Activated CD4-positive, alpha-beta memory T cell treated with anti-CD3 and anti-CD28 coated beads, Interleukin-2, amount 10 ng/mL, durations not matched to agents 7 days and 5 days (primary cell): ENCODE measurements at regions of chr10 and their contacts with region 1.

Region 1: DNA sequence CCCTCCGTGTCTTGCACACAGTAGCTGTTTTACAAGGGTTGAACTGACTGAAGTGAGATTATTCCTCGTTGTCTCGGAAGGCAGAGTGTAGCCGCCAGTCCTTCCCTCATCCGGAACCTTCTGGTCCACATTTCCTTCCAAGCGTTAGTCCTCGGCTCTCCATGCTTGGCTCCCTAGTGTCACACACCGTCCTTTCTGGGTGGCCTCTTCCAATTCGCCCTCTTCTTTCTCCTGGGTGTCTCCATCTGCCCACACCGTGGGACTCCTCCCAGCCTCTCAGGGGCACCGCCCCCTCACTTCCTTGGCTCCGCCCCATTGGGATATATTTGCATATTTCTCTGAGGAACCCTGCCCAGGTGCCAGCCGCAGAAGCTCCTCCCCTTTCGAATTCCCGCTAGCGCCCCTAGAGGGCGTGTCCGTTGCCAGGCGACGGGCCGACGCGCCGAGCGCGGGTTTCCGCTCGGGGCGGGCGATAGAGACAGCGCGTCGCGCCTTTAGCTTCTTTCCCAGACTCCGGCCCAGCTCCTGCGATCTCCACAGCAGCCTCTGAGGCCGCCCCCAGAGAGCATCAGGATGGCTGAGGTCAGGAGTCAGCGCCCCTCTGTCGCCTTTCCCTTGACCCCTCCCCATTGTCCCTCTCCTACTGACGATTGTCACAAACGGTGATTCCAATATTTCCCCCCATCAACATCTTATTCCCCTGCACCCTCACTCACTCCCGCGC is at the start of gene CFAP58:
- DNase-seq: peak; percentile 96
- H3K4me3 Mint-ChIP-seq: no peak within 1 kb of the TSS
- H3K27ac Mint-ChIP-seq: peak within 1 kb of the TSS; percentile 64
- H3K4me1 Mint-ChIP-seq: no peaks in the 10 kb centered on the region
- H3K27me3 Mint-ChIP-seq: no peaks in the 10 kb centered on the region
- total RNA-seq, gene CFAP58: 0.45 to 0.58 TPM

Region 2: DNA sequence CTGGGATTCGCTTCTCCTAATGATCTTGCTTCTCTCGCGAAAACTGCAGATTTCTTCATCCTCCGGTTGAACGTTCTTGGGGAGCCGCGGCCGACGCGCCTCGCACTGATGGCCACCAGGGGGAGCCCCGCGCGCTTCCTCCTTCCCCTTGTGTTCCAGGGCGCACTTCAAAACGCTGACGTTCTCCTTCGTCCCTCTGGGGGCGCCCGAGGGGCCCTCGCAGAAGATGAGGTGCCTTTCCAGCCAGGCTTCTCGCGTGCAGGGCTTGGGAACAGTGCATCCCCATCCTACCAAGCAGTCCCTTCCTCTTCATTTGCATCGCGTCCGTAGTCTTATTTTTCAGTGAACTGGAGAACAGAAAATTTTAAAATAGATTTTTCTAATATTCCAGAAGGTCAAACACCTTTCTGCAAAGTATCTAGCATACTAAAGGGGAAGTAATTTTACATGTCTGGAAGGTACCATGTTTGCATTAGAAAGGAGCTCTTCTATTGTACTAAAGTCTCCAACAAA is 62.0 kb before region 1 on chr10:
- CTCF ChIA-PET with region 1: interaction called, 175 read pairs
- POLR2A ChIA-PET with region 1: interaction called, 8 read pairs
- DNase-seq: peak; percentile 90
- H3K4me3 Mint-ChIP-seq: no peak overlapping the region
- H3K27ac Mint-ChIP-seq: no peak overlapping the region
- H3K4me1 Mint-ChIP-seq: peaks cover 12% of the 10 kb centered on the region
- H3K27me3 Mint-ChIP-seq: peaks cover 33% of the 10 kb centered on the region

Region 3: GRCh38 chr10:104300736-104301292 is 52.7 kb before region 1 on chr10:
- CTCF ChIA-PET with region 1: interaction called, 237 read pairs
- POLR2A ChIA-PET with region 1: interaction called, 29 read pairs
- DNase-seq: peak; percentile 41
- H3K4me3 Mint-ChIP-seq: no peak overlapping the region
- H3K27ac Mint-ChIP-seq: peak overlapping the region; percentile 42
- H3K4me1 Mint-ChIP-seq: peaks cover 42% of the 10 kb centered on the region
- H3K27me3 Mint-ChIP-seq: peaks cover 8% of the 10 kb centered on the region

Region 4: GRCh38 chr10:104308439-104308903 is 45.0 kb before region 1 on chr10:
- CTCF ChIA-PET with region 1: interaction called, 237 read pairs
- POLR2A ChIA-PET with region 1: interaction called, 29 read pairs
- DNase-seq: no peak
- H3K4me3 Mint-ChIP-seq: no peak overlapping the region
- H3K27ac Mint-ChIP-seq: peak overlapping the region; percentile 71
- H3K4me1 Mint-ChIP-seq: peaks cover 47% of the 10 kb centered on the region
- H3K27me3 Mint-ChIP-seq: no peaks in the 10 kb centered on the region

Region 5: DNA sequence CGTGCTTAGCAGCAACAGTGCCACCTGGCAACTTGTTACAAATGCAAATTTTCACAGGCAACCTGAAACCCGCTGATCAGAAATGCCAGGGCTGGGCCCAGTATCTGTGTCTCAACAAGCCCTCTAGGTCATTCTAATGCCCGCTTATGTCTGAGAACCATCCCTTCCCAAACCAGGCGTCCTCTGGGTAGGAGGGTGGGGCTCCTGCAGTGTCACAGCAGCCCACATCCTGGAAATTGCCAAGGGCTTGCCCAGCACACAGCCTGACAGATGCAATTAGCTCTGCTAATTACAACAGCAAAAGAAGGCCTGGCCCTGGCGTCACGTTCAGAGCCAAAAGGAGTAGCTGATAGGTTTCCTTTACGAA is 31.1 kb before region 1 on chr10:
- CTCF ChIA-PET with region 1: interaction called, 13 read pairs
- POLR2A ChIA-PET with region 1: interaction called, 6 read pairs
- DNase-seq: peak; percentile 76
- H3K4me3 Mint-ChIP-seq: peak overlapping the region; percentile 67
- H3K27ac Mint-ChIP-seq: peak overlapping the region; percentile 89
- H3K4me1 Mint-ChIP-seq: peaks cover 87% of the 10 kb centered on the region
- H3K27me3 Mint-ChIP-seq: no peaks in the 10 kb centered on the region

Region 6: GRCh38 chr10:104337974-104338735 is 15.3 kb before region 1 on chr10 and contains the start of gene ITPRIP:
- CTCF ChIA-PET with region 1: interaction called, 39 read pairs
- POLR2A ChIA-PET with region 1: interaction called, 37 read pairs
- DNase-seq: peak; percentile 78
- H3K4me3 Mint-ChIP-seq: peak within 1 kb of the TSS; percentile 95
- H3K27ac Mint-ChIP-seq: peak within 1 kb of the TSS; percentile 99
- H3K4me1 Mint-ChIP-seq: peaks cover 45% of the 10 kb centered on the region
- H3K27me3 Mint-ChIP-seq: peaks cover 8% of the 10 kb centered on the region
- total RNA-seq, gene ITPRIP: 24.6 to 25.9 TPM

Region 7: DNA sequence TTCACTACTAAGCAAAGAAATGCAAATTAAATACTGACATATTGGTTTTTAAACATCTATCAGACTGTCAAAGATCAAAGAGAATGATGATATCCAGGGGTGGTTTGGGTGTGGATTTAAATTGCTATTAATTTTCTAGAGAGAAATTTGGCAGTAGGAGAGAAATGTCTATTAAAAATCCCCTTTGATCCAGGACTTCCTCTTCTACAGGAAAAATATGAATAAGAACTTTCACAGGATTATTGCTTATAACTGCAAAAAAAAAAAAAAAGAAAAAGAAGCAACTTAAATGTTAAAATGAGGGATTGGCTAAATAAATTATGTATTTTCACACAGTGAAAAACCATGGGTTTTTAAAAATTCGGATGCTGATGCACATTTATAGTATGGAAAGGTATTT is 21.1 kb after region 1 on chr10:
- CTCF ChIA-PET with region 1: no interaction called
- POLR2A ChIA-PET with region 1: no interaction called
- DNase-seq: no peak
- H3K4me3 Mint-ChIP-seq: no peak overlapping the region
- H3K27ac Mint-ChIP-seq: no peak overlapping the region
- H3K4me1 Mint-ChIP-seq: peaks cover 9% of the 10 kb centered on the region
- H3K27me3 Mint-ChIP-seq: peaks cover 33% of the 10 kb centered on the region